CD14-positive monocyte (primary cell): ENCODE measurements at regions of chr11 and their contacts with region 1.

Region 1: DNA sequence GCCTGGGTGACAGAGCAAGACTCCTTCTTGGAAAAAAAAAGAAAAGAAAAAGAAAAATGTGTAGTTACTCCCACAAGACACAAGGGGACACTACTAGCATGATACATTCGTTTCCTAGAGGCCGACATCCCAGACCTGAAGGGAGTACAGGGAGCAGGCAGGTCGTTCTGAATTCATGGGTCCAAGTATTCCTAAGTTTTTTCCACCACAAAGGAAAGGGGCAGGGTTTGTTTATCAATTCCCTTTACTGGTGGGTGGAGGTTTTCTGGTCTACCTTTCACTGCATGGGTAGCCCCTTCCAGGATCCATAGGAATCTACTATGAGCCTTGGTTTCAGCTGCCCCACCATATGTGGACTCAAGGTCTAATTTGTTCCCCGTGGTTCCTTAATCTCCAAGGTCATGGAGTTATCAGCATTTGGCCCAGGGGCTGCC is 11.8 kb downstream of the TIGD3 start:
- DNase-seq: peak; percentile 51 to 72 (median 71)
- H3K4me3 ChIP-seq: no peak overlapping the region
- H3K4me3 Mint-ChIP-seq: no peak overlapping the region
- H3K27ac ChIP-seq: no peak overlapping the region
- H3K27ac Mint-ChIP-seq: no peak overlapping the region
- H3K4me1 ChIP-seq: peaks cover 30 to 37% of the 10 kb centered on the region in 2 donors
- H3K4me1 Mint-ChIP-seq: peaks cover 33% of the 10 kb centered on the region
- H3K27me3 ChIP-seq: no peaks in the 10 kb centered on the region
- H3K27me3 Mint-ChIP-seq: peaks cover 1 to 4% (median 1%) of the 10 kb centered on the region in 3 donors
- CTCF ChIP-seq: peak; percentile 82

Region 2: GRCh38 chr11:65274735-65275682 is 91.3 kb before region 1 on chr11:
- intact Hi-C with region 1: no loop called
- DNase-seq: peak; percentile 64 to 80 (median 72)
- H3K4me3 ChIP-seq: no peak overlapping the region
- H3K4me3 Mint-ChIP-seq: no peak overlapping the region
- H3K27ac ChIP-seq: no peak overlapping the region
- H3K27ac Mint-ChIP-seq: no peak overlapping the region
- H3K4me1 ChIP-seq: peaks cover 10 to 12% of the 10 kb centered on the region in 2 donors
- H3K4me1 Mint-ChIP-seq: peaks cover 15% of the 10 kb centered on the region
- H3K27me3 ChIP-seq: no peaks in the 10 kb centered on the region
- H3K27me3 Mint-ChIP-seq: peaks cover 0 to 2% (median 1%) of the 10 kb centered on the region in 3 donors
- CTCF ChIP-seq: peak; percentile 93

Region 3: GRCh38 chr11:65301491-65302329 is 64.6 kb before region 1 on chr11:
- intact Hi-C with region 1: no loop called
- DNase-seq: no peak
- H3K4me3 ChIP-seq: no peak overlapping the region
- H3K4me3 Mint-ChIP-seq: peak overlapping the region in 1 of 2 donors; percentile 76
- H3K27ac ChIP-seq: peak overlapping the region in 1 of 2 donors; percentile 9
- H3K27ac Mint-ChIP-seq: peak overlapping the region in 2 of 7 donors; percentile 78 to 82
- H3K4me1 ChIP-seq: peaks cover 8 to 15% of the 10 kb centered on the region in 2 donors
- H3K4me1 Mint-ChIP-seq: peaks cover 14% of the 10 kb centered on the region
- H3K27me3 ChIP-seq: no peaks in the 10 kb centered on the region
- H3K27me3 Mint-ChIP-seq: peaks cover 0 to 2% (median 0%) of the 10 kb centered on the region in 3 donors
- CTCF ChIP-seq: no peak

Region 4: GRCh38 chr11:65403607-65404121 is 37.3 kb after region 1 on chr11:
- intact Hi-C with region 1: loop called in 1 of 2 experiments (anchors 5 kb)
- DNase-seq: peak; percentile 68 to 85 (median 84)
- H3K4me3 ChIP-seq: peak overlapping the region in 1 of 3 experiments; percentile 29
- H3K4me3 Mint-ChIP-seq: peak overlapping the region in 1 of 2 donors; percentile 12
- H3K27ac ChIP-seq: peak overlapping the region; percentile 41 to 60
- H3K27ac Mint-ChIP-seq: peak overlapping the region; percentile 76 to 92 (median 88)
- H3K4me1 ChIP-seq: peaks cover 21 to 24% of the 10 kb centered on the region in 2 donors
- H3K4me1 Mint-ChIP-seq: peaks cover 19% of the 10 kb centered on the region
- H3K27me3 ChIP-seq: no peaks in the 10 kb centered on the region
- H3K27me3 Mint-ChIP-seq: peaks cover 0 to 3% (median 0%) of the 10 kb centered on the region in 3 donors
- CTCF ChIP-seq: no peak